ENCODE measurements at regions of chr4 and their contacts with region 1.

Region 1: DNA sequence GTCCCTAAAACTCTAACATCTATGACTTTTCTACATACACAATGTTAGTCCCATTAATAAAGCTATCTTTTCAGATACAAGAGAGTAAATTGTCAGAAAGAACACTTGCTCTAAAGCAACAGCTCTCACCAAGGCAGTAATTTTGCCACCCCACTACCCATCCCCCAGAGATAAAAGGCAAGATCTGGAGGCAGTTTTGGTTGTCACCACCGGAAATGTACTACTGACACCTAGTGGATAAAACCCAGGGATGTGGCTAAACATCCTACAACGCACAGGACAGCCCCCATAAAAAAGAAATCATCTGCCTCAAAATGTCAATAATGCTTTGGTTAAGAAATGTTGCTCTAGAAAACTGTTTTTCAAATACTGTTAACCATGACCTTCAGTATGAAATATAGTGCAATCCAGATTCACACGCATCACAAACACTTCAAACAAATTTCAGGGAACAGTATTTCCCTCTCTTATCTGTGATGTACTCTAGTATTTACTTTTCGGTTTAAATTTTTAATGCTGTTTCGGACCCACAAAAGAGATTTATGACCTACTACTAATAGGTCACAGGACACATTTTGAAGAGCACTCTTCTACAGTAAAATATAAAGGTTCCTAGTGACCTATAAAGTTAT is 5.1 kb downstream of the FBXL5 start:
- DNase-seq: peak; percentile 75
- H3K4me3 Mint-ChIP-seq: no peak overlapping the region
- H3K27ac Mint-ChIP-seq: peak overlapping the region; percentile 24
- H3K4me1 Mint-ChIP-seq: peaks cover 59% of the 10 kb centered on the region
- H3K27me3 Mint-ChIP-seq: no peaks in the 10 kb centered on the region

Region 2: GRCh38 chr4:15479089-15479912 is 170.7 kb before region 1 on chr4:
- CTCF ChIA-PET with region 1: interaction called, 14 read pairs
- DNase-seq: no peak
- H3K4me3 Mint-ChIP-seq: no peak overlapping the region
- H3K27ac Mint-ChIP-seq: no peak overlapping the region
- H3K4me1 Mint-ChIP-seq: no peaks in the 10 kb centered on the region
- H3K27me3 Mint-ChIP-seq: peaks cover 3% of the 10 kb centered on the region

Region 3: DNA sequence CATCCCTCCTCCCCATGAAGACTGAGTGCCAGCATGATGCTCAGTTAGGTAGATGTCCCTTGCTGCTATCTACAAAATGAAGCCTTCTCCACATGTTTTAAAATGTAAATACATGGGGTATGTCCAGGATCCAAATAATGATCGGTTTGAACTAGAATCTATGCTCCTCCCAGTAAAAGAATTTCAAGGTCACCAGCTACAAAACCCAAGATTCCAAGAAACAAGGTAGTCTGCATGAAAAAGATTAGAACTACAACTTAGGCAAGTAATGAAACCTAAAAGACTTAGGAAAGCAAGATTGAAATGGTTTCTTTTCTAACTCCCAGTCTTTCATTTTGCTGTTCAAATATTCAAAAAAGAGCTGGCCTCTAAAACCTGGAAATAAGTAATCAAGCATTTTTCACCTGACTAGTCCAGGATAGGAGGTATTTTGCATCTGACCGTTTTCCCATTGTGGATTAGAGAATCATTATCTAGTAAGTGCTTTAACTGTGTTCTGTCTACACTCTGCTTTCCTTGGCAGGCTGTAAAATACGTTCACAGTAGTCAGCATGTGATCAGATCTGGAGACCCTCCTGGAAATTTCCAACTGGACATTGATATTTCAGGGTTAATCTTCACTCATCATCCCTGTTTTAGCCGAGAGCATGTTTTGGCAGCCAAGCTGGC is 123.0 kb before region 1 on chr4:
- CTCF ChIA-PET with region 1: no interaction called
- DNase-seq: no peak
- H3K4me3 Mint-ChIP-seq: no peak overlapping the region
- H3K27ac Mint-ChIP-seq: no peak overlapping the region
- H3K4me1 Mint-ChIP-seq: no peaks in the 10 kb centered on the region
- H3K27me3 Mint-ChIP-seq: no peaks in the 10 kb centered on the region

Region 4: DNA sequence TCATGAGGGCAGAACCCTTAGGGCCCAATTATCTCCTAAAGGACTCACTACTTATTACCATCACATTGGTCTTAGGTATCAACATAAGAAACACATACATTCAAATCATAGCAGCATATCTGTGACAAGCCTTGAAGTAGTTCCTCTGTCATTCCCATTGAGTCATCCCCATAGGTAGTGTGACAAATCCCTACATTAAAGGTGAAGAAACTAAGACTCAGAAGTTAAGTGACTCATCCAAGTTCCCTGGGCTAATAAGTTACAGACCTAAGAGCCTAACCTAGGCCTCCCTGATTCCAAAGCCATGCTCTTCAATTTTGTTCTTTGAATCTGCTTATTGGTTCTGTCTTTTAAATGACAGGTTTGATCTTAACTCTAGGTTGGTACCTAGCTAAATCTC is 186.3 kb after region 1 on chr4:
- CTCF ChIA-PET with region 1: no interaction called
- DNase-seq: no peak
- H3K4me3 Mint-ChIP-seq: no peak overlapping the region
- H3K27ac Mint-ChIP-seq: no peak overlapping the region
- H3K4me1 Mint-ChIP-seq: peaks cover 22% of the 10 kb centered on the region
- H3K27me3 Mint-ChIP-seq: no peaks in the 10 kb centered on the region

Region 5: DNA sequence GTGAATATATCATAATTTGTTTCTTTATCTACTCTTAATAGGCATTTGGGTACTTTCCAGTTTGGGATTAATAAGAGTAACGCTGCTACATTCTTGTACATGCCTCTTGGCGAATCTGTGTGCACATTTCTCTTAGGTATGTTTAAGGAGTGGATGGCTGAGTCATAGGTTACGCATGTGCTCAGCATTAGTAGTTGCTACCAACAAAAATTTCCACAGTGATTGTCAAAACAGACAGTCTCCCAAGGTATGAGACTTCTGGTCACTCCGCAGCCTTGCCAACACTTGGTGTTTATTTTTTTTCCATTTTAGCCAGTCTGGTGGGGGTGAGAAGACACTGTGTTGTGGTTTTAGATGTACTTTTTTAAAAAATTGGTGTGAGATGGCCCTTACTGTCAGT is 243.9 kb after region 1 on chr4:
- CTCF ChIA-PET with region 1: no interaction called
- DNase-seq: no peak
- H3K4me3 Mint-ChIP-seq: no peak overlapping the region
- H3K27ac Mint-ChIP-seq: no peak overlapping the region
- H3K4me1 Mint-ChIP-seq: no peaks in the 10 kb centered on the region
- H3K27me3 Mint-ChIP-seq: peaks cover 41% of the 10 kb centered on the region